B cell (primary cell): ENCODE measurements at regions of chr4 and their contacts with region 1.

Region 1: GRCh38 chr4:173318648-173319211 is 15.4 kb downstream of the HMGB2 start:
- DNase-seq: peak; percentile 53
- ATAC-seq: no peak
- H3K4me3 ChIP-seq: no peak overlapping the region
- H3K4me3 Mint-ChIP-seq: no peak overlapping the region
- H3K27ac ChIP-seq: no peak overlapping the region
- H3K27ac Mint-ChIP-seq: no peak overlapping the region
- H3K4me1 ChIP-seq: no peaks in the 10 kb centered on the region
- H3K4me1 Mint-ChIP-seq: no peaks in the 10 kb centered on the region
- H3K27me3 ChIP-seq: no peaks in the 10 kb centered on the region
- H3K27me3 Mint-ChIP-seq: no peaks in the 10 kb centered on the region
- CTCF ChIP-seq: peak; percentile 75

Region 2: GRCh38 chr4:173013232-173013930 is 305.3 kb before region 1 on chr4:
- CTCF ChIA-PET with region 1: interaction called, 6 read pairs
- POLR2A ChIA-PET with region 1: no interaction called
- intact Hi-C with region 1: loop called (anchors 5 kb)
- DNase-seq: peak; percentile 69
- ATAC-seq: peak; percentile 57
- H3K4me3 ChIP-seq: no peak overlapping the region
- H3K4me3 Mint-ChIP-seq: no peak overlapping the region
- H3K27ac ChIP-seq: no peak overlapping the region
- H3K27ac Mint-ChIP-seq: no peak overlapping the region
- H3K4me1 ChIP-seq: no peaks in the 10 kb centered on the region
- H3K4me1 Mint-ChIP-seq: no peaks in the 10 kb centered on the region
- H3K27me3 ChIP-seq: peaks cover 0 to 2% (median 0%) of the 10 kb centered on the region in 4 experiments
- H3K27me3 Mint-ChIP-seq: peaks cover 7% of the 10 kb centered on the region
- CTCF ChIP-seq: peak; percentile 86

Region 3: DNA sequence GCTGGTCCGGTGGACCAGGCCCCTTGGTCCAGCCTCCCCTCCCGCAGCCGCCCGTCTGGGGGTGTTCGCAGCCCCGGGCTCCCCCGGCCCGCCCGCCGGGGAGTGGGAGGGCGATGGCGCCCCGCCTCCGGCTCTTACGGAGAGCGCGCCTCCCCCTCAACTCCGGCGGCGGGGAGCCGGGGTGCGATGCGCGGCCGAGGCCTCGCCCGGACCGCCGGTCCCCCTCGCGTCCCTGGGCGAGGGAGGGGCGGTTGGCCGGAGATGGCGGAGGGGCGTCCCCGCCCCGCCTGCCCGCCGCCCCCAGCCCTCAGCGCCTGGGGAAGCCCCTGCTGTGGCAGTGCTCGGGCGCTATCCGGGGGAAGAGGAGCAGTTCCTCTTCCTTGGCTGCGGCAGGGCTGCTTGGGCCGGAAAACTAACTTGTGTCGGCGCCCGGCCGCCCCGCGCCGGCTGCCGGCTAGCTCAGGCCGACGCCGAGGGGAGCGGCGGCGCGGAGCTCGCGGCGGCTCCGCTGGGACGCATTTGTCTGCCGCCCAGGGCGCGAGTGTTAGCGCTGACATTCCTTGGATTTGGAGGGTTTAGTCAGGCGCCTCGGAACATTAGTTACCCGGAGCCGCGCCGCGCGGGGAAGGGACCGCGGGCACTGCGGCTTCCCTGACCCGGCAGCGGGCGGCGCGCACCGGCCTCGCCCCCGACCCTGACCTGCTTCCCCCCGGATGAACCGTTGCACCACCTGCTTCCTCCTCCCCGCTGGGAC is 149.1 kb before region 1 on chr4:
- CTCF ChIA-PET with region 1: no interaction called
- POLR2A ChIA-PET with region 1: no interaction called
- intact Hi-C with region 1: no loop called
- DNase-seq: peak; percentile 88
- ATAC-seq: peak; percentile 66
- H3K4me3 ChIP-seq: peak overlapping the region; percentile 46 to 93 (median 78)
- H3K4me3 Mint-ChIP-seq: peak overlapping the region; percentile 89
- H3K27ac ChIP-seq: peak overlapping the region; percentile 56 to 85
- H3K27ac Mint-ChIP-seq: peak overlapping the region; percentile 89
- H3K4me1 ChIP-seq: peaks cover 36 to 44% of the 10 kb centered on the region in 2 donors
- H3K4me1 Mint-ChIP-seq: peaks cover 50% of the 10 kb centered on the region
- H3K27me3 ChIP-seq: no peaks in the 10 kb centered on the region
- H3K27me3 Mint-ChIP-seq: no peaks in the 10 kb centered on the region
- CTCF ChIP-seq: no peak

Region 4: DNA sequence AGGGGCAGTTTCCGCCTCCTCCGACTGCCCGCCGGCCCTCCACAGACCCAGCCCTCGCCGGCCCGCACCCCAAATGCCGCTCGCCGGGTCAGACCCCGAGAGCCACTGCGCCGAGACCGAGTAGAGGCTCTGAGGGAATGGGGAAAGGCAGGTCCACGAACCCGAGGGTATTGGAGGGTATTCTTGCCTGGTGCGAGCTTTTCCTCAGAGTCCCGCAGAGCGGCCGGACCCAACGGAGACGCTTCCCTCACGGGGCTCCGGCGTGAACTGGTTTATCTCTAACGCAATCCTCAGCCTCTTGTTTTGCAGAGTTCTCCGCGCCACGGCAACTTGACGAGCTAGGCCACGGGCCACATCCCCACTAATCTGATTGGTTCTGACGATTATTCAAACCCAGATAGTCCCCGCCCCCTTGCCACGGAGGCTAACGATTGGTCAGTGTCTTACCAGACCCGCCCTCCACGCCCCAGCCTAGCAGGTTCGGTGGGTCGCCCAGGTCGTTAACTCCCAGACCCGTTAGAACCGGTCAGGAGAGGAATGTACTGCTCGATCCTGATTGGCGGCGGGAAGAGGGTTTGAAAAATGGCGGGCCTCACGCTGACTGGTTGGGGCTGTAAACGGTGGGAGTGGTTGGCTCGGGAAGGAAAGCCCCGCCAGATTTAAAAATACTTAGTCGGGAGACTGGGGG is 15.5 kb after region 1 on chr4 and contains the start of gene HMGB2:
- CTCF ChIA-PET with region 1: interaction called, 39 read pairs
- POLR2A ChIA-PET with region 1: interaction called, 5 read pairs
- intact Hi-C with region 1: no loop called
- DNase-seq: peak; percentile 100
- ATAC-seq: peak; percentile 93
- H3K4me3 ChIP-seq: peak within 1 kb of the TSS; percentile 74 to 99 (median 94)
- H3K4me3 Mint-ChIP-seq: peak within 1 kb of the TSS; percentile 99
- H3K27ac ChIP-seq: peak within 1 kb of the TSS; percentile 95 to 99
- H3K27ac Mint-ChIP-seq: peak within 1 kb of the TSS; percentile 100
- H3K4me1 ChIP-seq: peaks cover 16 to 18% of the 10 kb centered on the region in 2 donors
- H3K4me1 Mint-ChIP-seq: peaks cover 30% of the 10 kb centered on the region
- H3K27me3 ChIP-seq: no peaks in the 10 kb centered on the region
- H3K27me3 Mint-ChIP-seq: peaks cover 4% of the 10 kb centered on the region
- CTCF ChIP-seq: no peak
- total RNA-seq, gene HMGB2: 81.5 and 82.5 TPM in 2 replicates

Region 5: DNA sequence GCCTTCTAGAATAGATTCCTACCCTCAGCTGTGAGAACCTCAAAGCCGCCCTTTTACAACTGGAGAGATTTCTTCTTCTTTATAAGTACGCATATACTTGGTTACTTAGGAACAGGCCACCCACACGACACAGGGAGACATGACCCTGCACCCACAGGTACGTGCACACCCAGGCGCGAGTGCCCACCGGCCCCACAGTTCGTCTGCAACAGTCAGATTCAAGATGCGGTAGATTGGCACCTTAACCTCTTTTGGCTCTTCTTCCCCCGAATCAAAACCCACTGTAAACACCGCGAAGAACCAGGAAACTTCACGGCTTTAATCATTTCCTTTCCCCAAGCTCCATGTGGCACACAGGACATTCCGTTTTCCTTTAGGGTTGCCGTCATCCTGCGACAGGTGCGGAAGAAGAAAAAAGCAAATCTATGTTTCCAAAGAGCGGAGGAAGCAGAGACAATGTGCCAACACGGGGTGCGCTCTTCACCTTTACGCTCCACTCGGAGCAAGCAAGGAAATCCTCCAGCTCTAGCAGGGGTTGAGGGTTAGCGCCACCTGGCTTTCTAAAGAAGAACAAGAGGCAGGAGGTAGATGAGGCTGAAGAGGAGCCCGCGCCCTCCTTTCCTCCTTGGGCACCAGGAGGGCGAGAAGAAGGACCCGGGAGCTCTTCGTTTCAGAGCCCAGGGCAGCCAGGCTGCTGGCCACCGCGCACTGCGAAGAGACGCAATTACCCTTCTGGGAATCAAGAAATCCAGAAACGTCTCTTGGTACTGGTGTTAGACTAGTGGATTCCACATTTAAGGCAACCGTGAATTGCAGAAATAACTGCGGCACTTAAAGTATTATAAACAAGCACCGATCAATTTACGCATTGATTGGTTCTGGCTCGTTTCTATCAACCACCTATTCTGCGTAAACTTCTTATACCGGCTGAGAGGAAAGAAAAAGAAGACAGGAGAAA is 175.6 kb after region 1 on chr4:
- CTCF ChIA-PET with region 1: interaction called, 13 read pairs
- POLR2A ChIA-PET with region 1: no interaction called
- intact Hi-C with region 1: loop called (anchors 2 kb)
- DNase-seq: peak; percentile 67
- ATAC-seq: peak; percentile 85
- H3K4me3 ChIP-seq: peak overlapping the region; percentile 5 to 61 (median 32)
- H3K4me3 Mint-ChIP-seq: peak overlapping the region; percentile 92
- H3K27ac ChIP-seq: no peak overlapping the region
- H3K27ac Mint-ChIP-seq: peak overlapping the region; percentile 37
- H3K4me1 ChIP-seq: peaks cover 11 to 29% of the 10 kb centered on the region in 2 donors
- H3K4me1 Mint-ChIP-seq: peaks cover 29% of the 10 kb centered on the region
- H3K27me3 ChIP-seq: peaks cover 0 to 22% (median 6%) of the 10 kb centered on the region in 4 experiments
- H3K27me3 Mint-ChIP-seq: peaks cover 23% of the 10 kb centered on the region
- CTCF ChIP-seq: peak; percentile 66

Region 6: GRCh38 chr4:173591760-173592159 is 273.0 kb after region 1 on chr4:
- CTCF ChIA-PET with region 1: no interaction called
- POLR2A ChIA-PET with region 1: no interaction called
- intact Hi-C with region 1: no loop called
- DNase-seq: no peak
- ATAC-seq: no peak
- H3K4me3 ChIP-seq: no peak overlapping the region
- H3K4me3 Mint-ChIP-seq: no peak overlapping the region
- H3K27ac ChIP-seq: no peak overlapping the region
- H3K27ac Mint-ChIP-seq: no peak overlapping the region
- H3K4me1 ChIP-seq: no peaks in the 10 kb centered on the region
- H3K4me1 Mint-ChIP-seq: no peaks in the 10 kb centered on the region
- H3K27me3 ChIP-seq: no peaks in the 10 kb centered on the region
- H3K27me3 Mint-ChIP-seq: peaks cover 8% of the 10 kb centered on the region
- CTCF ChIP-seq: no peak

Region 7: DNA sequence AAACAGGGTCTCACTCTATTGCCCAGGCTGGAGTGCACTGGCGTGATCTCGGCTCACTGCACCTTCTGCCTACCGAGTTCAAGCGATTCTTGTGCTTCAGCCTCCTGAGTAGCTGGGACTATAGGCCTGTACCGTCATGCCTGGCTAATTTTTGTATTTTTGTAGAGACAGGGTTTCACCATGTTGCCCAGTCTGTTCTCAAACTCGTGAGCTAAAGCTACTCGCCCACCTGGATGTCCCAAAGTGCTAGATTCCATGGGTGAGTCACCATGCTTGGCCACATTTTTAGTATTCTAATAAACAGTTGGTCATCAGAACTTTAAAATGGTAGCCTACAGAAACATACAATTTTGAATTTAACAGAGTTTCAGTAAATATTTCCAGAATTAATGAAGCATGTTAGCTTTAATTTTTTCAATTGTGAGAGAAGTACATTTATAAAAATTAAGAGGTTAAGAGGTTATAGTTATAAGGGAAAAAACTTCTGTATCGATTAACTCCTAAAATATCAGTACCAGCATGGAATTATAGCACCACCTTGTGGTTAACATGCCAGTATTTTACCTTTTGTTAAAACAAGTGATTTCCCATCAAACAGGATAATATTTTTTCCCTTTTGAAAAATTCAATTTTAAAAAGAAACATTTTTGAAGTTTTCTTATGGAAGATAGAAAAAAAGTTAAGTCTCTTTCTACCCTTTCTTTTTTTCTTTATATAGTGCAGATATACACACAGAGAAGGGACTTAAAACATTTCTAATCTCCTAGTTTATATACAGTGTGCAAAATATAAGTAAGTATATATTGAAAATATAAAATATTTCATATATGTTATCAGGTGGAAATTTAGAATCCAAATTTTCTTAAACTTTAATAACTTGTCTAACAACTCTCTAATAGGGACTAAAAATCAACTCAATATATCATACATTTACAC is 1000.4 kb after region 1 on chr4:
- CTCF ChIA-PET with region 1: interaction called, 3 read pairs
- POLR2A ChIA-PET with region 1: no interaction called
- intact Hi-C with region 1: loop called (anchors 2 kb)
- DNase-seq: peak; percentile 38
- ATAC-seq: no peak
- H3K4me3 ChIP-seq: no peak overlapping the region
- H3K4me3 Mint-ChIP-seq: no peak overlapping the region
- H3K27ac ChIP-seq: no peak overlapping the region
- H3K27ac Mint-ChIP-seq: no peak overlapping the region
- H3K4me1 ChIP-seq: no peaks in the 10 kb centered on the region
- H3K4me1 Mint-ChIP-seq: no peaks in the 10 kb centered on the region
- H3K27me3 ChIP-seq: no peaks in the 10 kb centered on the region
- H3K27me3 Mint-ChIP-seq: no peaks in the 10 kb centered on the region
- CTCF ChIP-seq: peak; percentile 83